ENCODE measurements at regions of chr6 and their contacts with region 1.

Region 1: GRCh38 chr6:13666194-13667105 is 45.2 kb downstream of the RANBP9 start:
- DNase-seq: peak in 4 of 14 experiments; percentile 16 to 30 (median 27)
- ATAC-seq: peak; percentile 41
- H3K4me3 ChIP-seq: no peak overlapping the region
- H3K4me3 Mint-ChIP-seq: peak overlapping the region; percentile 57
- H3K27ac ChIP-seq: no peak overlapping the region
- H3K27ac Mint-ChIP-seq: peak overlapping the region; percentile 3
- H3K4me1 ChIP-seq: peaks cover 12% of the 10 kb centered on the region
- H3K4me1 Mint-ChIP-seq: peaks cover 90% of the 10 kb centered on the region
- H3K27me3 ChIP-seq: no peaks in the 10 kb centered on the region
- H3K27me3 Mint-ChIP-seq: no peaks in the 10 kb centered on the region
- CTCF ChIP-seq: no peak

Region 2: DNA sequence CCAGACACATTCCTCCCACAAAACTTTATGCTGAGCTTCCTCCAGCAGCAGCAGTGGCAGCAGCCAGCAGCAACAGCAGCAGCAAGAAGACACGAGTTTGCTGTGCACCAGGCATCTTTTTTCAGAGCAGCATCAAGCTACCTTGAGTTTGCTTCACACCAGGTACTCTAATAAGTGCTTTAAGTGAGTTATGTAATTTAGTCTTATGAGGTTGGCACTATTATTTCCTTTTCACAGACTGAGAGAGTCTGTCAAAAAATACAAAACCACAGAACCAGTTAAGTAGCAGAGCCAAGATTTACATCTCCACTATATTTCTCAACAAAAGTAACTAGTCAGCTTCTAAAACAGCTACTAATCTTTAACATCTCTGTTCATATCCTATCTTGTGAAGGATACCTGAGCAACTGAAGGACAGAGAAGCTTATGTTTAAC is 21.5 kb after region 1 on chr6:
- CTCF ChIA-PET with region 1: interaction called, 4 read pairs
- POLR2A ChIA-PET with region 1: interaction called, 3 read pairs
- intact Hi-C with region 1: loop called in 1 of 2 experiments (anchors 2 kb)
- DNase-seq: peak in 10 of 14 experiments; percentile 7 to 69 (median 28)
- ATAC-seq: peak; percentile 83
- H3K4me3 ChIP-seq: no peak overlapping the region
- H3K4me3 Mint-ChIP-seq: peak overlapping the region; percentile 79
- H3K27ac ChIP-seq: peak overlapping the region; percentile 64 to 83
- H3K27ac Mint-ChIP-seq: peak overlapping the region; percentile 87
- H3K4me1 ChIP-seq: peaks cover 43% of the 10 kb centered on the region
- H3K4me1 Mint-ChIP-seq: peaks cover 64% of the 10 kb centered on the region
- H3K27me3 ChIP-seq: no peaks in the 10 kb centered on the region
- H3K27me3 Mint-ChIP-seq: no peaks in the 10 kb centered on the region
- CTCF ChIP-seq: no peak

Region 3: DNA sequence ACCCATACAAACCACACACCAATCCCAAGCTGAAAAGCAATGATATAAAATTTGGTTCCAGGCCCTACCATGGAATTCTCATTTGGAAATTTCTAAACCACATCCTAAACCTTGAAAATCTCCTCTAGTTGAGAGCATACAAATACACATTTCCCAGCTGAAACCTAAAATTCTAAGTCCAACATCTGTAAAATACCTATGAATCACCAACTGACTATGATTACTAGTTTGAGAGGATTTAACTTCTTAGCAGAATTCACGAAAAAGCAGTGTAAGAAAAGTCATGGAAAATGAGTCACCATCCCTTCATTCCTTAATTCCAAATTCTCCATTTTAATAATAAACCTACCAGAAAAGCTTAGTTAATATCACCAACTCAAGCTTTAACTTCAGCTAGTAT is 29.8 kb after region 1 on chr6:
- CTCF ChIA-PET with region 1: interaction called, 3 read pairs
- POLR2A ChIA-PET with region 1: no interaction called
- intact Hi-C with region 1: loop called (anchors 5 kb)
- DNase-seq: no peak
- ATAC-seq: no peak
- H3K4me3 ChIP-seq: no peak overlapping the region
- H3K4me3 Mint-ChIP-seq: no peak overlapping the region
- H3K27ac ChIP-seq: peak overlapping the region; percentile 1 to 57
- H3K27ac Mint-ChIP-seq: peak overlapping the region; percentile 91
- H3K4me1 ChIP-seq: peaks cover 23% of the 10 kb centered on the region
- H3K4me1 Mint-ChIP-seq: peaks cover 71% of the 10 kb centered on the region
- H3K27me3 ChIP-seq: no peaks in the 10 kb centered on the region
- H3K27me3 Mint-ChIP-seq: no peaks in the 10 kb centered on the region
- CTCF ChIP-seq: no peak

Region 4: GRCh38 chr6:13702809-13703302 is 36.4 kb after region 1 on chr6:
- CTCF ChIA-PET with region 1: interaction called, 3 read pairs
- POLR2A ChIA-PET with region 1: no interaction called
- intact Hi-C with region 1: loop called (anchors 5 kb)
- DNase-seq: peak in 1 of 14 experiments; percentile 32
- ATAC-seq: no peak
- H3K4me3 ChIP-seq: no peak overlapping the region
- H3K4me3 Mint-ChIP-seq: no peak overlapping the region
- H3K27ac ChIP-seq: no peak overlapping the region
- H3K27ac Mint-ChIP-seq: no peak overlapping the region
- H3K4me1 ChIP-seq: peaks cover 40% of the 10 kb centered on the region
- H3K4me1 Mint-ChIP-seq: peaks cover 36% of the 10 kb centered on the region
- H3K27me3 ChIP-seq: no peaks in the 10 kb centered on the region
- H3K27me3 Mint-ChIP-seq: no peaks in the 10 kb centered on the region
- CTCF ChIP-seq: no peak